ENCODE measurements at regions of chr3 and their contacts with region 1.

Region 1: DNA sequence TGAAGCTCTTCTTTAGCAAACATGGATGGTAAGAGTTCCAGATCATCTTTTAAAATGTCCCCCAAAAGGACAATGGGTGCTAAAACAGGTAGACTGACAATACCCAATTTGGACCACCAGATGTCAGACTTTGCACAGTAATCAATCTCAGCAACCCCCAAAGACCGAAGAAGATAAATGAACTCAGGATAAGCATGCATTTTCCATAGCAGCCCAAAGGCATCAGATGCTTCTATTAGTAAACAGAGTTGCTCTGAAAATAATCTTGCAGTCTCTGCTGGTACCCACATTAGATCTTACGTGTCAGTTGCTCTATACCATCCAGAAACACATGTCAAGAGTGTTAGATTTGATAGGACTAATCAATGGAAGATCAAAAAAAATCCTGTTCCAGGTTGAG is 20.6 kb downstream of the MYH15 start:
- DNase-seq: peak; percentile 26 to 44 (median 40)
- H3K4me3 ChIP-seq: no peak overlapping the region
- H3K4me3 Mint-ChIP-seq: no peak overlapping the region
- H3K27ac ChIP-seq: no peak overlapping the region
- H3K27ac Mint-ChIP-seq: no peak overlapping the region
- H3K4me1 ChIP-seq: no peaks in the 10 kb centered on the region
- H3K4me1 Mint-ChIP-seq: peaks cover 2% of the 10 kb centered on the region
- H3K27me3 ChIP-seq: no peaks in the 10 kb centered on the region
- H3K27me3 Mint-ChIP-seq: peaks cover 2 to 4% (median 3%) of the 10 kb centered on the region in 3 donors
- CTCF ChIP-seq: peak; percentile 74

Region 2: DNA sequence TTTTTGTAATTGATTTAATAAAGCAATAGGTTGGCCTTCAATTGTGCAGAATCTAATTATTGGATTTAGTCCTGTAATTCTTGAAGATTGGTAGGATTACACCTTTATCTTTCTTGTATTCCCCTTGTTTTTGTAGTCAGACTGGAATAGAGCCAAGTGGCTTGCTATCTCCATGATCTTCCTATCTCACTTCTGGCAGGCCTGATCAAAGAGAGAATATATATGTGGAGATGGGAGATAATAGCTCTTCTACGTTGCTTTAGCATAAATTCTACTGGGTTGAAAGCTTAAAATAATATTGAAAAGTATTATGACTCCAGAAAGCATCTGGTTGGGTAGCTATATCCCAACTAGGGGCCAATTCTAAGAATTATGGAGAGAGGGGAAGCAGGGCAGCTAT is 250.7 kb before region 1 on chr3:
- intact Hi-C with region 1: no loop called
- DNase-seq: no peak
- H3K4me3 ChIP-seq: no peak overlapping the region
- H3K4me3 Mint-ChIP-seq: no peak overlapping the region
- H3K27ac ChIP-seq: no peak overlapping the region
- H3K27ac Mint-ChIP-seq: no peak overlapping the region
- H3K4me1 ChIP-seq: no peaks in the 10 kb centered on the region
- H3K4me1 Mint-ChIP-seq: peaks cover 6% of the 10 kb centered on the region
- H3K27me3 ChIP-seq: no peaks in the 10 kb centered on the region
- H3K27me3 Mint-ChIP-seq: peaks cover 0 to 2% (median 0%) of the 10 kb centered on the region in 3 donors
- CTCF ChIP-seq: no peak

Region 3: GRCh38 chr3:108448593-108448992 is 41.2 kb before region 1 on chr3:
- intact Hi-C with region 1: no loop called
- DNase-seq: no peak
- H3K4me3 ChIP-seq: no peak overlapping the region
- H3K4me3 Mint-ChIP-seq: no peak overlapping the region
- H3K27ac ChIP-seq: no peak overlapping the region
- H3K27ac Mint-ChIP-seq: no peak overlapping the region
- H3K4me1 ChIP-seq: peaks cover 0 to 4% of the 10 kb centered on the region in 2 donors
- H3K4me1 Mint-ChIP-seq: peaks cover 15% of the 10 kb centered on the region
- H3K27me3 ChIP-seq: no peaks in the 10 kb centered on the region
- H3K27me3 Mint-ChIP-seq: no peaks in the 10 kb centered on the region
- CTCF ChIP-seq: no peak

Region 4: GRCh38 chr3:108552267-108553159 is 62.7 kb after region 1 on chr3:
- intact Hi-C with region 1: loop called (anchors 2 to 5 kb)
- DNase-seq: peak; percentile 15 to 51 (median 33)
- H3K4me3 ChIP-seq: no peak overlapping the region
- H3K4me3 Mint-ChIP-seq: no peak overlapping the region
- H3K27ac ChIP-seq: no peak overlapping the region
- H3K27ac Mint-ChIP-seq: peak overlapping the region in 1 of 7 donors; percentile 40
- H3K4me1 ChIP-seq: no peaks in the 10 kb centered on the region
- H3K4me1 Mint-ChIP-seq: no peaks in the 10 kb centered on the region
- H3K27me3 ChIP-seq: no peaks in the 10 kb centered on the region
- H3K27me3 Mint-ChIP-seq: no peaks in the 10 kb centered on the region
- CTCF ChIP-seq: peak; percentile 64

Region 5: GRCh38 chr3:108914774-108915641 is 425.2 kb after region 1 on chr3:
- intact Hi-C with region 1: loop called in 1 of 2 experiments (anchors 5 kb)
- DNase-seq: peak; percentile 0 to 29 (median 8)
- H3K4me3 ChIP-seq: no peak overlapping the region
- H3K4me3 Mint-ChIP-seq: no peak overlapping the region
- H3K27ac ChIP-seq: no peak overlapping the region
- H3K27ac Mint-ChIP-seq: no peak overlapping the region
- H3K4me1 ChIP-seq: no peaks in the 10 kb centered on the region
- H3K4me1 Mint-ChIP-seq: no peaks in the 10 kb centered on the region
- H3K27me3 ChIP-seq: no peaks in the 10 kb centered on the region
- H3K27me3 Mint-ChIP-seq: peaks cover 2 to 12% (median 9%) of the 10 kb centered on the region in 3 donors
- CTCF ChIP-seq: peak; percentile 87